ENCODE measurements at regions of chr1 and their contacts with region 1.

Region 1: GRCh38 chr1:225627304-225627947 is 25.5 kb downstream of the ENAH start:
- DNase-seq: no peak
- ATAC-seq: 0 out of 2 replicates have a peak, but pooled peaks have one; percentile 30
- H3K4me3 Mint-ChIP-seq: no peak overlapping the region
- H3K27ac Mint-ChIP-seq: peak overlapping the region; percentile 5; the same call in 1 of the 2 replicates
- H3K4me1 Mint-ChIP-seq: peaks cover 62% of the 10 kb centered on the region
- H3K27me3 Mint-ChIP-seq: no peaks in the 10 kb centered on the region
- CTCF ChIP-seq: no peak

Region 2: GRCh38 chr1:225526878-225527277 is 100.5 kb before region 1 on chr1:
- CTCF ChIA-PET with region 1: no interaction called
- POLR2A ChIA-PET with region 1: no interaction called
- DNase-seq: no peak
- ATAC-seq: no peak
- H3K4me3 Mint-ChIP-seq: no peak overlapping the region
- H3K27ac Mint-ChIP-seq: peak overlapping the region; percentile 39; the same call in 1 of the 2 replicates
- H3K4me1 Mint-ChIP-seq: peaks cover 30% of the 10 kb centered on the region
- H3K27me3 Mint-ChIP-seq: no peaks in the 10 kb centered on the region
- CTCF ChIP-seq: no peak

Region 3: DNA sequence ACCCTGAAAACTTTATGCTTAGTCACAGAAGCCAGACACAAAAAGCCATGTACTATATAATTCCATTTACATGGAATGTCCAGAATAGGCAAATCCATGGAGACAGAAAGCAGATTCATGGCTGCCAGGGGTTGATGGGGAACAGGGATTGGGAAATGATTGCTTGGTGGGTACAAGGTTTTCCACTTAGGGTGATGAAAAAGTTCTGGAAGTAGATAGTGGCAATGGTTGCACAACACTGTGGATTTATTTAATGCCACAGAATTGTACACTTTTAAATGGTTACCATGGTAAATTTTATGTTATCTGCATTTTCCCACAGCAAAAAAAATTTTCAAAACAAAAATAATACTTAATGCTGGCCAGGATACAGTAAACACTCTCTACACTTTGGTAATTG is 15.1 kb before region 1 on chr1:
- CTCF ChIA-PET with region 1: no interaction called
- POLR2A ChIA-PET with region 1: interaction called, 10 read pairs
- DNase-seq: no peak
- ATAC-seq: no peak
- H3K4me3 Mint-ChIP-seq: no peak overlapping the region
- H3K27ac Mint-ChIP-seq: no peak overlapping the region; the same call in 1 of the 2 replicates
- H3K4me1 Mint-ChIP-seq: peaks cover 57% of the 10 kb centered on the region
- H3K27me3 Mint-ChIP-seq: no peaks in the 10 kb centered on the region
- CTCF ChIP-seq: no peak

Region 4: GRCh38 chr1:225677350-225678124 is 50.1 kb after region 1 on chr1:
- CTCF ChIA-PET with region 1: no interaction called
- POLR2A ChIA-PET with region 1: no interaction called
- DNase-seq: peak; percentile 72
- ATAC-seq: peak; percentile 94
- H3K4me3 Mint-ChIP-seq: peak overlapping the region; percentile 57
- H3K27ac Mint-ChIP-seq: no peak overlapping the region
- H3K4me1 Mint-ChIP-seq: peaks cover 15% of the 10 kb centered on the region
- H3K27me3 Mint-ChIP-seq: peaks cover 25% of the 10 kb centered on the region
- CTCF ChIP-seq: no peak